ENCODE measurements at regions of chr13 and their contacts with region 1.

Region 1: DNA sequence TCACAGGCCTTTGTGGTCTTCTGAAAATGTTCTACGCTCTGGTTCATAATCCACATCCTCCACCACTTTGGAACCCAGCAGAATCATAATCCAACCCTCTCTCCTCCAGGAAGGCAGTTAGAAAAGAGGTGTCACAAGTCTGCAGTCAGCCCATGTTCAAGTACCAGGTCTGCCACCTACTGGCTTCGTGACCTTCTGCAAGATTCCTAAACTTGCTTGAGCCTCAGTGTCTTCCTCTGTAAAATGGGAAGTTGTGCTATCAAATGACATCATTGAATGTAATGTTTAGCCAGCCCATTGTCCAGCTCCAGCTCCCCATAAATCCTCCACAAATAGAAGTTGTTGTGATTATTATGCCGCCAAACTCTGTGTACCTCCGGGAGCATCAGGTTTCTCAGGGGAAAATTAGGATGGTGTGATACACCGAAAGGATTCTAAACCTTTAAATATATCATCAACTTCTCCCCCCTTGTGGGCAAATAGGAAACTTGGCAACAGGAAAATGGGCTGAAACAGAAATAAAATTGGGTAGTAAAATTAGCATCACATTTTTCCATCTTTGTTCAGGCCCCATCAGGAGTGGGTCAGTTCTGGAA is 109.7 kb downstream of the NUFIP1 start:
- DNase-seq: no peak
- ATAC-seq: peak in 1 of 8 donors; percentile 43
- H3K4me3 ChIP-seq: no peak overlapping the region
- H3K27ac ChIP-seq: no peak overlapping the region
- H3K4me1 ChIP-seq: no peaks in the 10 kb centered on the region
- H3K27me3 ChIP-seq: no peaks in the 10 kb centered on the region
- CTCF ChIP-seq: peak; percentile 18 to 60 (median 42)

Region 2: GRCh38 chr13:44484562-44485138 is 394.9 kb before region 1 on chr13:
- intact Hi-C with region 1: loop called in 6 of 10 experiments (anchors 2 to 10 kb)
- DNase-seq: no peak
- ATAC-seq: peak in 2 of 8 donors; percentile 25 to 34
- H3K4me3 ChIP-seq: peak overlapping the region in 5 of 10 donors; percentile 1 to 23 (median 11)
- H3K27ac ChIP-seq: peak overlapping the region in 1 of 10 donors; percentile 60
- H3K4me1 ChIP-seq: peaks cover 0 to 20% (median 8%) of the 10 kb centered on the region in 9 donors
- H3K27me3 ChIP-seq: no peaks in the 10 kb centered on the region
- CTCF ChIP-seq: no peak

Region 3: GRCh38 chr13:44837250-44837649 is 42.3 kb before region 1 on chr13:
- intact Hi-C with region 1: loop called in 1 of 10 experiments (anchors 5 kb)
- DNase-seq: no peak
- ATAC-seq: no peak
- H3K4me3 ChIP-seq: no peak overlapping the region
- H3K27ac ChIP-seq: no peak overlapping the region
- H3K4me1 ChIP-seq: peaks cover 0 to 21% (median 4%) of the 10 kb centered on the region in 9 donors
- H3K27me3 ChIP-seq: no peaks in the 10 kb centered on the region
- CTCF ChIP-seq: no peak

Measured in heart right ventricle (tissue), 16 donors.